Aorta (tissue), 5 donors: ENCODE measurements at regions of chrX and their contacts with region 1.

Region 1: DNA sequence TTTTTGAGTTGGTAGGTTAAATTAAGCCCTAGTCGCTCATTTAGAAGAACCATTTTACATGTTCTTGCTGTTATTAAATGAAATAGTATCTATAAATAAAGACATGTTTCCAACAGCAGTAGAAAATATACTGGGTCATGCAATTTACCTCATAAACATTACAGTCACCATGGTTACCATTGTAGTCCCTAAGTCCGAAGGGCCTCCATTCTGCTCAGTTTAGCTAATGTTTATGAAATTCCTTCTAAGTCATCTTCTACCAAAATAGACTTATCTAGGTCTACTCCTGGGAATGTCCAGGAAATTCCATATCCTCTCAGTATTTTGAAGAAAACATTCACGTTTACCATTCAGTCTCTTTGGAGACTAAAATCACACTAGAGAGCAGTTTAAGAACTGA is 292.5 kb upstream of the DCAF8L1 start:
- DNase-seq: no peak
- ATAC-seq: no peak
- H3K4me3 ChIP-seq: no peak overlapping the region
- H3K27ac ChIP-seq: no peak overlapping the region
- H3K4me1 ChIP-seq: no peaks in the 10 kb centered on the region
- H3K27me3 ChIP-seq: no peaks in the 10 kb centered on the region

Region 2: DNA sequence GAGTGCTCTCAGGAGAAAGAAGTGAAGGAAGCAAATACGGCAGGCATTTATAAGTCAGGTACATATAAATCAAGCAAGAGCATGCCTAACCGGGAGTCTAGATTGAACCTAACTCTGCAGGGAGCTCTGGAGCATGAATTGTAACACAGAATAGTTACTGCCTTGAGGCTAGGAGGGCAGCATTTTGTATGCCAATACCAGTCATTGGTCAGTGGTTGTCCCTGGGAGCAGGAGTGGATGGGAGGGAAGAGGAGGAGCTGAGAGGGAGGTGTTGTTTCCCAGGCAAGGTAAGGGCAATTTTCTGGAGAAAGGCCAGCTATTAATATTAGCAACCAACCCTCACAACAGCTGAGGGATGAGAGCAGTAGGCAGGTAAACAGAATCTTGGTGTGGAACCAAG is 67.8 kb before region 1 on chrX:
- intact Hi-C with region 1: no loop called
- DNase-seq: no peak
- ATAC-seq: no peak
- H3K4me3 ChIP-seq: no peak overlapping the region
- H3K27ac ChIP-seq: no peak overlapping the region
- H3K4me1 ChIP-seq: no peaks in the 10 kb centered on the region
- H3K27me3 ChIP-seq: no peaks in the 10 kb centered on the region

Region 3: GRCh38 chrX:28329156-28329555 is 55.4 kb after region 1 on chrX:
- intact Hi-C with region 1: loop called in 1 of 2 experiments (anchors 10 kb)
- DNase-seq: no peak
- ATAC-seq: no peak
- H3K4me3 ChIP-seq: no peak overlapping the region
- H3K27ac ChIP-seq: no peak overlapping the region
- H3K4me1 ChIP-seq: no peaks in the 10 kb centered on the region
- H3K27me3 ChIP-seq: no peaks in the 10 kb centered on the region